CD8-positive, alpha-beta T cell (primary cell): ENCODE measurements at regions of chr20 and their contacts with region 1.

Region 1: DNA sequence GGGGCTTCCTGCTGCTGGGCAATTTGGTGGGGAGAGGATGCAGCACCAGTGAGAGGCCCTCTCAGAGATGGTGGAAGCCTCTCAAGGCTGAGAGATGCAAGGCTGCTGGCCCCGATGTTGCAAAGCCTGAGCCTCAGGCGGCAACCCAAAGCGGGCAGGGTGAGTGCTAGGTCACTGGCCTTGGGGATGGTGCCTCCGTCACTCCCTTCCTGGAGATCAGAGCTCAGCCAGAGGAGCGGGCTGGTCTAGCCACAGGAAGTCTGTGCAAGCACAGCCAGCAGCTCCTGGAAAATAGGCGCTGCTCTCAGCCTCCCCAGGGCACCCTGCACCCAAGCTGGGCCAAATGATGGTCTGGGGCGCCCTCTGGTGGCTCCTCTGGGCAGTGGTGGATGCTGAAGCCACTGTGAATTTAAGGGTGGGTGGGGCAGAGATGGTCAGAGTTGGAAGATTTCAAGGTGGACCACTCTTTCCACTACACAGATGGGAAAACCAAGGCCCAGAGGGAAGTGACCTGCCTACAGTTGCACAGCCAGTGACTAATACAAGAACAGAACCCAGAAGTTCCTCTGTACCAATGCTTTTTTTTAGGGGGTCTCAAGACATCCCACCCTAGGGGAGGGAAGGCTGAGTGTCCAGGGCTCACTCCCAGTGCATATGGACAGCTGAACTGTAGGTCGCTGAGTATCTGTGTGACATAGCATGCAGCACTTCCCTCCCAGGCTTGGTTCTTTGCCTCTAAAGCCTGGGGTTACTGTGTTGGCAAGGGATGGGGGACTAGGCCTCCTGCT is 20.8 kb downstream of the C20orf203 start:
- DNase-seq: peak; percentile 77 to 97 (median 86)
- ATAC-seq: peak; percentile 97
- H3K4me3 ChIP-seq: no peak overlapping the region
- H3K4me3 Mint-ChIP-seq: peak overlapping the region; percentile 56
- H3K27ac ChIP-seq: no peak overlapping the region
- H3K27ac Mint-ChIP-seq: no peak overlapping the region
- H3K4me1 ChIP-seq: peaks cover 7% of the 10 kb centered on the region
- H3K4me1 Mint-ChIP-seq: peaks cover 8% of the 10 kb centered on the region
- H3K27me3 ChIP-seq: no peaks in the 10 kb centered on the region
- H3K27me3 Mint-ChIP-seq: no peaks in the 10 kb centered on the region
- CTCF ChIP-seq: peak; percentile 95

Region 2: DNA sequence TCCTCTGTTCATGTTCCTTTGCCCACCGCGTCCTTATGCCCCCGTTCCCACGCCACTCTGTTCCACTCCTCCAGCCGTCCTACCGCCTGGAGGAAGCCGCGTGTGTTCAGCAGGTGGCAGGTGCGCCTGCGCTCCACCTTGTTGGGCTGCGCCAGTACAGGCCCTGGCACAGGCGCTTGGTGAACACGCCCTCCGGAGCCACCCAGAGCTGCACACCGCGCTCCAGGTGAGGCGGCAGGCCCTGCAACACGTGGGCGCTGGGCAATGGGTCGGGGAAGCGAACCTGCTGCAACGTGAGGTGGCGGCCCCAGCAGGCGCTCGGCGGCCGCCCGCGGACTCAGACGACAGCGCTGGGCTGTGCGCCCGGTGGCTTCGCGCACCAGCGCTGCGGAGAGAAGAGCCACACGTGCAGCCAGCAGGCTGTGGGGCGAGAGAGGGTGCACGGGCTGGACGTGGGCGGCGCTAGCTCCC is 803.4 kb before region 1 on chr20:
- CTCF ChIA-PET with region 1: interaction called, 3 read pairs
- POLR2A ChIA-PET with region 1: no interaction called
- intact Hi-C with region 1: loop called in 1 of 2 experiments (anchors 1 kb)
- DNase-seq: no peak
- ATAC-seq: no peak
- H3K4me3 ChIP-seq: no peak overlapping the region
- H3K4me3 Mint-ChIP-seq: no peak overlapping the region
- H3K27ac ChIP-seq: no peak overlapping the region
- H3K27ac Mint-ChIP-seq: no peak overlapping the region
- H3K4me1 ChIP-seq: no peaks in the 10 kb centered on the region
- H3K4me1 Mint-ChIP-seq: no peaks in the 10 kb centered on the region
- H3K27me3 ChIP-seq: peaks cover 0 to 4% of the 10 kb centered on the region in 2 experiments
- H3K27me3 Mint-ChIP-seq: peaks cover 18% of the 10 kb centered on the region
- CTCF ChIP-seq: no peak

Region 3: DNA sequence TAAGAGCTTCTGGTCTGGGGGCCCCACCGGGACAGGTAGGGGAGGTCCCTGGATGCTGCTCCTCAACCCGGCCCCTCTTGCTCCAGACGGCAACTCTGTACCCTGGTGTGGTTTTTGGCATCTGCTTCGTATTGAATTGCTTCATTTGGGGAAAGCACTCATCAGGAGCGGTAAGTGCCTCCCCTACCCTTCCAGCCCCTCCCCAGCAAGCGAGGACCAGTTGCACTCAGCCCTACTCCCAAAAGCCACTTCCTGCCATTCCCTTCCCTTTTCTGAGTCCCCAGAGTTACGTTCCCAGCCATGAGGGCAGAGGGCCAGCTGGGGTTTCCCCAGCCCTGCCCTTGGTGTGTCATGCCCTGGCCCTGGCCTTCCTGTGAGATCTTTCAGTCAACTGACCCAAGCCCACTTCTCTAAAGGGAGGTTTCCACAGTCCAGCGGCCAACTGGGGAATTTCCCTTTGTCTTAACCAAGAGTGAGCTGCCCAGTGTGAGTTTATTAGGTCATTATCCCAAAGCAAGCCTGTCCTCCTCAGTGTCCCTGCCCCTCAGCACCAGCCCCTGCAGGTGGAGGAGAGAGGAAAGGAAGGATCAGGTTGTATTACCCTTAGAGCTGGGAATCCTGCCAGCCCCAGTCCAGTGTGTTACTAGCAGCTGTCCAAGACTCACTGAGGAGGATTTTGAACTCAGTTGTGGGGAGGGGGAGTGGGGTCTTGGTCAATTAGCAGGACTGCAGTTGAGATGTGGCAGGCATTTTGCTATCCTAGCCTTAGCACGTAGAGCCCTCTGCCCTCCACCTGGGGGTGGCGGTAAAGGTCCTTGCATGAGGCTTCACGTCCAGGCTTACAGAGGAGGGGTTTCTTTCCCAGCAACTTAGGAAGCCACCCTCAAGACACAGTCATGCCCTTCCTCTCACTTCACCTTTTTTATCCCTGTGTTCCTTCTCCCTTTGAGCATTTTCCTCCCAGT is 497.6 kb before region 1 on chr20:
- CTCF ChIA-PET with region 1: no interaction called
- POLR2A ChIA-PET with region 1: no interaction called
- intact Hi-C with region 1: loop called (anchors 5 kb)
- DNase-seq: peak in 5 of 9 experiments; percentile 16 to 49 (median 32)
- ATAC-seq: no peak
- H3K4me3 ChIP-seq: no peak overlapping the region
- H3K4me3 Mint-ChIP-seq: no peak overlapping the region
- H3K27ac ChIP-seq: no peak overlapping the region
- H3K27ac Mint-ChIP-seq: no peak overlapping the region
- H3K4me1 ChIP-seq: no peaks in the 10 kb centered on the region
- H3K4me1 Mint-ChIP-seq: no peaks in the 10 kb centered on the region
- H3K27me3 ChIP-seq: no peaks in the 10 kb centered on the region
- H3K27me3 Mint-ChIP-seq: no peaks in the 10 kb centered on the region
- CTCF ChIP-seq: no peak

Region 4: DNA sequence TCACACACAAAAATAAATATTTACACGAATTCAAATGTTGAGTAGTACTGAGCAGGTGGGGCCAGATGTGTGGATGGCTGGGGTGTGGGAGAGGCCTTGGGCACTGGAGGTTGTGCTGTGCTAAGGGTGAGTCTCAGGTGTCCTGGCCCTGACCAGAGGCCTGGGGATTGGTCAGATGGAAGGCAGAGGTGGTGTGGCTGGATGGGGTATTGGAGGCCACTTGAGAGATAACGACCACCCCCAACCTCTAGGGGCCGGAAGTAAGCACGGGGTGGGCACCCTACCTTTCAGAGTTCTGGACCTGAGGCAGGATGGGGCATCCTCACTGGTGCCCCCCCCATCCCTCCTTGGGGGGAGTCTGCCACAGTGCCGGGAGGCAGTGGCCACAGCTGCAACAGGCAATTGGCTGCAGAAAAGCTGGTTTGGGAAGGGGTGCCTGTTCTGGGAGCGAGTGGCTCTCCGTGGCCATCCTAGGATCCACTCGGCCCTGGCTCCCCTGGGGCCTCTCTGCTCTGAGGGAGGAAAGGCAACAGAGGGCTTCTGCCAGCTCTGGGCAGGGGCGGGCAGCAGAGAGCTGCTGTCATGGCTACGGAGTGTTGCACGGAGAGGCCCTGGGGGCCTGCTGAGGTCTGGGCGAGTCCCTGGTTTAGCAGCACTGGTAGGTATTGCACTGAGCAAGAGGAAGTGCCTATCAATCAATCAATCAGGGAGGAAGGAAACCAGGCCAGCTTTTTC is 207.2 kb before region 1 on chr20:
- CTCF ChIA-PET with region 1: interaction called, 3 read pairs
- POLR2A ChIA-PET with region 1: no interaction called
- intact Hi-C with region 1: loop called in 1 of 2 experiments (anchors 10 kb)
- DNase-seq: peak in 2 of 9 experiments; percentile 10 to 44
- ATAC-seq: no peak
- H3K4me3 ChIP-seq: no peak overlapping the region
- H3K4me3 Mint-ChIP-seq: no peak overlapping the region
- H3K27ac ChIP-seq: no peak overlapping the region
- H3K27ac Mint-ChIP-seq: peak overlapping the region; percentile 76
- H3K4me1 ChIP-seq: peaks cover 23% of the 10 kb centered on the region
- H3K4me1 Mint-ChIP-seq: peaks cover 31% of the 10 kb centered on the region
- H3K27me3 ChIP-seq: no peaks in the 10 kb centered on the region
- H3K27me3 Mint-ChIP-seq: no peaks in the 10 kb centered on the region
- CTCF ChIP-seq: no peak

Region 5: GRCh38 chr20:32535953-32536823 is 116.7 kb before region 1 on chr20:
- CTCF ChIA-PET with region 1: interaction called, 17 read pairs
- POLR2A ChIA-PET with region 1: no interaction called
- intact Hi-C with region 1: no loop called
- DNase-seq: peak; percentile 66 to 93 (median 79)
- ATAC-seq: peak; percentile 34
- H3K4me3 ChIP-seq: peak overlapping the region; percentile 33 to 49
- H3K4me3 Mint-ChIP-seq: peak overlapping the region; percentile 82
- H3K27ac ChIP-seq: peak overlapping the region; percentile 52 to 88
- H3K27ac Mint-ChIP-seq: peak overlapping the region; percentile 97
- H3K4me1 ChIP-seq: peaks cover 87% of the 10 kb centered on the region
- H3K4me1 Mint-ChIP-seq: peaks cover 87% of the 10 kb centered on the region
- H3K27me3 ChIP-seq: no peaks in the 10 kb centered on the region
- H3K27me3 Mint-ChIP-seq: no peaks in the 10 kb centered on the region
- CTCF ChIP-seq: no peak

Region 6: DNA sequence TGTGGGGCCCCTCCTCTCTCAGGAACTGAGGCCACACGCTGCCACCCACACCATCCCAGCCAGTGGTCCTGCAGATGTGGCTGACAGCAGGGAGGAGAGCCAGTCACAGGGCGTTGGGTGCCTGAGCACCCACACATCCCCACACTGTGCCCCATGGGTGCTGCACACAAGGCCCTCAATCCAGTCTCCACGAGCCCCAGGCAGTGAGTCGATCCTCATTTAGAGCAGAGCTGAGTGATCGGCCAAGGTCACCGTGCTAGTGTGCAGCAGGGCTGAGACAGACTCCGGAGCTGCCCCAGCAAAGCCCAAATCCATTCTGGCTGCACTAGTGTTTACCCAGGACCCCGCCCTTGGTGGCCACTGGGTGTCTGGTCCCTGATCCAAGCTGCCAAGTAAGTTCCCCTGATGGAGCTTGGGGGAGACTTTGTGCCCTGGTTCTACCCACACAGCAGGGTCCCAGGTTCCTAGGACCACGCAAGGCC is 11.8 kb after region 1 on chr20:
- CTCF ChIA-PET with region 1: interaction called, 30 read pairs
- POLR2A ChIA-PET with region 1: no interaction called
- intact Hi-C with region 1: no loop called
- DNase-seq: no peak
- ATAC-seq: no peak
- H3K4me3 ChIP-seq: no peak overlapping the region
- H3K4me3 Mint-ChIP-seq: no peak overlapping the region
- H3K27ac ChIP-seq: no peak overlapping the region
- H3K27ac Mint-ChIP-seq: no peak overlapping the region
- H3K4me1 ChIP-seq: no peaks in the 10 kb centered on the region
- H3K4me1 Mint-ChIP-seq: peaks cover 3% of the 10 kb centered on the region
- H3K27me3 ChIP-seq: no peaks in the 10 kb centered on the region
- H3K27me3 Mint-ChIP-seq: no peaks in the 10 kb centered on the region
- CTCF ChIP-seq: no peak